Activated CD4-positive, alpha-beta T cell treated with anti-CD3 and anti-CD28 coated beads for 36 hours (primary cell): ENCODE measurements at regions of chr11 and their contacts with region 1.

Region 1: GRCh38 chr11:18203723-18204122 is 31.1 kb downstream of the MRGPRX4 start:
- DNase-seq: peak; percentile 21
- ATAC-seq: no peak
- H3K4me3 Mint-ChIP-seq: no peak overlapping the region
- H3K27ac Mint-ChIP-seq: no peak overlapping the region
- H3K4me1 Mint-ChIP-seq: no peaks in the 10 kb centered on the region
- H3K27me3 Mint-ChIP-seq: peaks cover 33% of the 10 kb centered on the region

Region 2: DNA sequence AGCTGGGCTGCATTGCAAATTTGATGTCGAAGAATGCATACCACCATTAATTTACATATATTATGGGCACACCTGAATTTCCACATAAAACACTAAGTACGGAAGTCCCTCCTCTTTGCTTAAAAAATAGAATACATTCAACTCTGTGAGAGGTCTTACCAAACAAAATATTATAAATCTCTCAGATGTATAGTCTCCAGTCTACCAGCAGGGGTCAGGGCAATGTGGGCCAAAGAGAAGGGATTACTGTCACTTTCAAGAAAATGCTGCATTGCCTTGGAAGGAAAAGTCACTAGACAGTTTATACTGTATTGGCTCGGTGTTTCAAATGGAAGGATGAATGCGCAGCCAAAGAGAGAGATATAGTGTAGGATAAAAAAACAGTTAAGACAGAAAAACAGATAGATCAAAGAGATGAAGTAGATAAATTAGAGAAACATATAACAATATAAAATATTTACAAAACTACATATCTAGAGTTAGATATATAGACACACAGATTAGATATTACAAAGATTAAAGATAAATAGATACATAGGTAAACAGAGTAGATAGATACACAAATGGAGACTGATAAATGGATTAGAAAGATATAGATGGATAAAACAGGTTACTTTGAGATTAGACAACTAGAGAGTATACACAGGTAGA is 211.8 kb before region 1 on chr11:
- CTCF ChIA-PET with region 1: interaction called, 6 read pairs
- POLR2A ChIA-PET with region 1: no interaction called
- intact Hi-C with region 1: loop called in 1 of 2 experiments (anchors 5 kb)
- DNase-seq: peak; percentile 63
- ATAC-seq: peak; percentile 78
- H3K4me3 Mint-ChIP-seq: no peak overlapping the region
- H3K27ac Mint-ChIP-seq: no peak overlapping the region
- H3K4me1 Mint-ChIP-seq: no peaks in the 10 kb centered on the region
- H3K27me3 Mint-ChIP-seq: no peaks in the 10 kb centered on the region

Region 3: GRCh38 chr11:18449251-18449650 is 245.5 kb after region 1 on chr11:
- CTCF ChIA-PET with region 1: no interaction called
- POLR2A ChIA-PET with region 1: no interaction called
- intact Hi-C with region 1: no loop called
- DNase-seq: no peak
- ATAC-seq: no peak
- H3K4me3 Mint-ChIP-seq: no peak overlapping the region
- H3K27ac Mint-ChIP-seq: no peak overlapping the region
- H3K4me1 Mint-ChIP-seq: no peaks in the 10 kb centered on the region
- H3K27me3 Mint-ChIP-seq: no peaks in the 10 kb centered on the region